ENCODE measurements at regions of chr16 and their contacts with region 1.

Region 1: DNA sequence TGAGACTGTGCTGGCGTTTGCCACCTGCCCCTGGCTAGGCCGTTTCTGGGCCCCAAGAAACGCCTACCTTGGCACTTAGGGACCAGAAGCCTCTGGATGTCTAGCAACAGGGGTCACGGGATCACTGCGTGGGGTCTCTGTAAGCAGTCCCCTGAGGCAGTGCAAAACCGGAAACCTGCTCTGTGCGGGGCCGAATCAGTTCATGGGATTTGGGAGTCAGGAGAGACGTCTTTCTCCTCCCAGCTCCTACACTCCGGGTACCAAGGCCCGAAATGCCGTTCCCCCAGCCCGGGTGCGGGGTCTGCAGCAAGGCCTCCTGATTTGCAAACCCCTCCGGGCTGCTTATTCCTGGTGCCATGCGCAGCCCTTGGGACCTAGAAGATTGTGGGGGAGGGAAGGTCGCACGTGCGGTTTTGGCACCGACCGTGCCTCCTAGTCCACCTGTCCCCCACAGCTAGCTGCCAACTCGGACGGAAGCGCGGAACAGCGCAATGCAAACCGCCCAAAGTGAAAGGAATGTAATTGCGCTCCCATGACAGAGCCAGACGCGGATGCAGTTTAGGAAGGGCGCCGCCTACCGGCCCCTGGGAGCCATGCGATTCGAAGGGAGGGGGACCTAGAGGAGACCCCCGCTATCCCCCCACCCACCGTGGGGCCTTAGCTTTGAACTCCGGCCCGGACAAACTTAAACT is 6.5 kb downstream of the IRX5 start:
- DNase-seq: no peak
- ATAC-seq: peak; percentile 49

Region 2: GRCh38 chr16:53945996-53946395 is 991.1 kb before region 1 on chr16:
- intact Hi-C with region 1: loop called (anchors 5 kb)
- DNase-seq: no peak
- ATAC-seq: peak; percentile 63

Region 3: DNA sequence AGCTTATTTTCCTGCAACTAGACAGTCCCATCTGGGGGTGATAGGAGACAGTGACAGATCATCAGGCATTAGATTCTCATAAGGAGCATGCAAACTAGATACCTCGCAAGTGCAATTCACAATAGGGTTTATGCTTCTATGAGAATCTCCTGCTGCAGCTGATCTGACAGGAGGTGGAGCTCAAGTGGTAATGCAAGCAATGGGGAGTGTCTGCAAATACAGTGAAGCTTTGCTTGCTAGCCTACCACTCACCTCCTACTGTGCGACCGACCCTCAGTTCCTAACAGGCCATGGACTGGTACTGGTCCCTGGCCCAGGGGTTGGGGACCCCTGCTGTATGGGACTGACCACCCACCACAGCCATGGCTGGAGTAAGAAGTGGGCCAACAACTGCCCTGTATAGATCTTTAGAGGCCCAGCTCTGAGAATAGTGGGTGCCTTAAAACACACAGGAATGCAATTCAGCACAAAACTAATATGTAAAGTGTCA is 624.6 kb before region 1 on chr16:
- intact Hi-C with region 1: no loop called
- DNase-seq: no peak
- ATAC-seq: no peak

Region 4: DNA sequence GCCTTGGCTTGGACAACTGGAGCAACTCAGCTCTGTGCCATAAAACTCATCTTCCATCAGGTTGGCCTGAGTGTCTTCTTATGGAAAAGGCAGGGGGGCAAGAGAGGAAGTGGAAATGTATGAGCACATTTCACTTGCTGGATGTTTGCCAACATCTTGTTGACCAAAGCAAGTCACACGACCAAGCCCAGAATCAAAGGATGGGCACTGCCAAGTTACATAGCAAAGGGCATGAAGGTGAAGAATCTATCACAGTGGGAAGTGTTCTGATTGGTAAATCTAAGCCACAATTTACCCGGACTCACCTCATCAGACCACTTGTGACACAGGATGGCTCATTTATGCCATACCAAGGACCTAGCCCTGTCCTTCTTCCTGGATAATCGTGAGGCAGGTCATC is 316.9 kb before region 1 on chr16:
- intact Hi-C with region 1: no loop called
- DNase-seq: no peak
- ATAC-seq: no peak

Region 5: DNA sequence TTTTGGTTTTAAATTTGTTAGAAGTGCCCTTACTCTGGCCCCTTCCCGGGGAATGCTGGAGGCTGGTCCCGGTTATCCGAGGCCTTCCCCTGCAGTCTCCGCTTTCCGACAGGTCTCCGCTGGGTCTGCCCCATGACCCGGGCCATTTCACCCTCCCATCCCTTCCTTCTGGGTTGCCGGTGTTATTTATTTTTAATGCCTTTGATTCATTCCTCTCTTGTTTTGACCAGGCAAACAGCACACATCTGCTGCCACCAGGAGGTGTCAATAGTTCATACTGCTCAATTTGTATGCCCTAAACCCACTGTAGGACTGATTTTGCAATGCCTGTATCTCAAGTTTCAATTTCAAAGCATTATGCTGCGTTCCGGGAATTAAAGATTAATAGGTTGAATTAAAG is 119.7 kb before region 1 on chr16:
- intact Hi-C with region 1: loop called (anchors 5 kb)
- DNase-seq: no peak
- ATAC-seq: peak; percentile 66

Region 6: GRCh38 chr16:55323637-55324490 is 386.7 kb after region 1 on chr16 and contains the start of gene IRX6:
- intact Hi-C with region 1: loop called (anchors 5 kb)
- DNase-seq: peak; percentile 72
- ATAC-seq: peak; percentile 61
- total RNA-seq, gene IRX6: 0.57 TPM

Region 7: DNA sequence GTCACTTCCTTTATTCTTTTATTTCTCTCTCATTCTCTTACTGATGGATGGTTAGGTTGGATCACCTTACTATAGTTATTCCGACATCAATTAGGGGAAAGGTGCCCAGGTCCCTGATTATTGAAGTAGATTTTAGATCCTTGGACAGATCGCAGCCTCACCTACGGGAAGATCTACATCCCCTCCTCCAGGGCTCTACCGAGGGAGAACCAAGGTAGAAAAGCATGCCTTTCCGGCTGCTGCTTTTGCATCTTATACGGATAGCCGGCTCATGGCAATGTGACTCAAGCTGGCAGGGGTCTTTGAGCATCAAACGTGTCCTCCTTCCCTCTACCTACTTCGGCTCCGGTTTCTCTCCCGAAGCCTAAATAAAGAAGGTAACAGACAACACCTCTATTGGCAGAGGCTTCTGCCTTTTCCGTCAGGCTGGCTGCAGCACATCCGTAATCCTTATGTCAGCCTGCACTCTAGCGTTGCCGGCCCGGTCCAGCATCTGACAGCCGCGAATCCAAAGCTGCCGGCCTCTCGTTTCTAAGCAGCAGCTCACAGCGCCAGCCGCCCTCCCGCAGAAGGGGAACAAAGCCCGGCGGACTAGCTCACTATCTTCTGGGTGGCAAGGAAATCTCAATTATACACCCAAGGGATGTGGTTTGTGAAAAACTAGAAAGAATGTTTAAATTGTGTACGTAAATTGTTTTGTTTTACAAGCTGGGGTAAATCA is 433.8 kb after region 1 on chr16:
- intact Hi-C with region 1: loop called (anchors 2 kb)
- DNase-seq: peak; percentile 82
- ATAC-seq: peak; percentile 83

Measured in Right ventricle myocardium inferior (tissue), 1 donor.